Mammary epithelial cell (primary cell): ENCODE measurements at regions of chr5 and their contacts with region 1.

Region 1: GRCh38 chr5:15003511-15003920 is 131.9 kb upstream of the ANKH start:
- DNase-seq: peak; percentile 56
- H3K4me3 ChIP-seq: no peak overlapping the region
- H3K27ac ChIP-seq: no peak overlapping the region
- H3K4me1 ChIP-seq: peaks cover 9% of the 10 kb centered on the region
- H3K27me3 ChIP-seq: no peaks in the 10 kb centered on the region
- CTCF ChIP-seq: peak; percentile 77 to 79

Region 2: DNA sequence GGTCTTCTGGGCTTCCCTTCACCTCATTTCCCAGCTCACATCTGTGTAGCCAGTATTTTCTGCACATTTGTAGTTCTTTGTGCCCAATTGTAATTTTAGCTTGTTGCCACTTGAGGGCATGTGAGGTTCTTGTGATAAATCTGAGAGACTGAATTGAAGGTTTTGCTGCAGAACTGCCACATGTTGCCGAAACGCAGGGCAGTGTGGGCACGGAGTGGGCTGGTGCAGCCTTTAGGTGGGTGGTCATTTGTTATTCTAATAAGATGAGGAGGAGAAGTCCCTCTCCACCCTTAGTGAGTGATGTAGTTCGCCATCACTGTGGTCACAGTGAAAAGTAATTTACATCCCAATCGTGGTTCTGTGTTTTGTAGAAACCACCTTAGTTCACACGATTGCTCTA is 317.8 kb before region 1 on chr5:
- CTCF ChIA-PET with region 1: no interaction called
- dilution Hi-C with region 1: no loop called
- in situ Hi-C with region 1: no loop called
- intact Hi-C with region 1: loop called (anchors 1 kb)
- DNase-seq: peak; percentile 53
- H3K4me3 ChIP-seq: no peak overlapping the region
- H3K27ac ChIP-seq: peak overlapping the region; percentile 30
- H3K4me1 ChIP-seq: peaks cover 20% of the 10 kb centered on the region
- H3K27me3 ChIP-seq: no peaks in the 10 kb centered on the region
- CTCF ChIP-seq: peak; percentile 52 to 74

Region 3: GRCh38 chr5:14727428-14727865 is 276.1 kb before region 1 on chr5:
- CTCF ChIA-PET with region 1: interaction called, 3 read pairs
- dilution Hi-C with region 1: no loop called
- in situ Hi-C with region 1: loop called in 1 of 2 experiments (anchors 5 kb)
- intact Hi-C with region 1: loop called (anchors 1 kb)
- DNase-seq: peak; percentile 58
- H3K4me3 ChIP-seq: no peak overlapping the region
- H3K27ac ChIP-seq: no peak overlapping the region
- H3K4me1 ChIP-seq: no peaks in the 10 kb centered on the region
- H3K27me3 ChIP-seq: no peaks in the 10 kb centered on the region
- CTCF ChIP-seq: peak; percentile 94 to 95

Region 4: DNA sequence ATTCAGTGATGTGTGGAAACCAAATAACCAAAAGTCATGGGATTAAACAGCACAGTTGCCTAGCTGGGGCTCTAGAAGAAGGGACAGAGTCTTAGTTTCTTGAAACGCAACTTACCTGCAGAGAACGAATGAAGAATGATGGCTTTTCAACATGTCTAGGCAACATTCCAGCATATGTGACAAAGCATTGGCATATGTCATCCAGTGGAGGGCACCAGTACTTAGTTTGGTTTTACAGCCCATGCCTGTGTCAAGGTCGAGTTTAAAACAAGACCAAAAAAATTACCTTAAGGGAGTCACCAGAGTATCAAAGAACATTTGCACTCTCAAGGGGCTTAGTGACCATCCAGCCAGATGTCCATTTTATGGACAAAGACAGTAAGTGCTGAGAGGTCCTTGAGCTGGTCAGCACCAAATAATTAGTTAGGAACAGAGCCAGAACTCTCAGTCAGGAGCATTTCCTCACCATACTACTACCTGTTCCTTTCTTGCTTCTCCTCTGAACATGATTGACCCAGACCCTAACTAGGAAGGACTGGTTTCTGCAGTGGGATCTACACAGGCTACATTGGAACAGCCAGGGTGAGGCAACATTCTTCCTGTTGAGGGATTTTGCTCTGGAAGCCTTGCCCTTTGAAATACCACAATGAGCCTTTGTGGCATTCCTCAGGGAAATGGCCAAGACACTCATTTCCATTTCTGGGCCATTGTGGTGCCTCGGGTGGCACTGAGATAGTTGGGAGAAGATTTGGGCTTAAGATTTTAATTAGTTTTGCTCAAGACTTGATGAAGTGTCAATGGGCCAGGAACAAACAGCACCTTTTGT is 56.5 kb before region 1 on chr5:
- CTCF ChIA-PET with region 1: no interaction called
- dilution Hi-C with region 1: no loop called
- in situ Hi-C with region 1: no loop called
- intact Hi-C with region 1: loop called (anchors 1 kb)
- DNase-seq: peak; percentile 40
- H3K4me3 ChIP-seq: no peak overlapping the region
- H3K27ac ChIP-seq: no peak overlapping the region
- H3K4me1 ChIP-seq: peaks cover 13% of the 10 kb centered on the region
- H3K27me3 ChIP-seq: no peaks in the 10 kb centered on the region
- CTCF ChIP-seq: peak; percentile 56 to 66

Region 5: DNA sequence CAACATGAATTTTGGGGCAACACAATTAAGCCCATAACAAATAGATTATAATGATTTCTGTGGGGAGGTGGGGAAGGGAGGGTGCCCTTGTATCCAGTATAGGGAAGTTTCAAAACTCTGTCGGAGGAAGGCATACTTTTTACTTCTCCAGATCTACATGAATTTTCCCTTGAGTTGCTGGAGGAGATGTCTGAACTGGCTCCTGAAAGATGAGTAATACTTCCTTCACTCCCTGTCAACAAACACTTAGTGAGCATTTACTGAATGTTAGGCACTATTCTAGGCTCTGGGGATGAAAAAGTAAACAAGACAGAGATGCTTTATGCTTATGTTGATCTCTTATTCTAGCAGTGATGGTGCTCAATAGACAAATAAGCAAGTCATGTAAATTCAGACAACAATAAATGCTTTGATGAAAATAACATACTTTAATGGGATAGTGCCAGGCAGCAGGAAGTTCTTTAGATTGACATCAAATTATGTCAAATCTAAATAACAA is 65.9 kb after region 1 on chr5:
- CTCF ChIA-PET with region 1: no interaction called
- dilution Hi-C with region 1: no loop called
- in situ Hi-C with region 1: no loop called
- intact Hi-C with region 1: no loop called
- DNase-seq: peak; percentile 11
- H3K4me3 ChIP-seq: no peak overlapping the region
- H3K27ac ChIP-seq: no peak overlapping the region
- H3K4me1 ChIP-seq: no peaks in the 10 kb centered on the region
- H3K27me3 ChIP-seq: no peaks in the 10 kb centered on the region
- CTCF ChIP-seq: no peak